Ovary (tissue), 10 donors: ENCODE measurements at regions of chr2 and their contacts with region 1.

Region 1: DNA sequence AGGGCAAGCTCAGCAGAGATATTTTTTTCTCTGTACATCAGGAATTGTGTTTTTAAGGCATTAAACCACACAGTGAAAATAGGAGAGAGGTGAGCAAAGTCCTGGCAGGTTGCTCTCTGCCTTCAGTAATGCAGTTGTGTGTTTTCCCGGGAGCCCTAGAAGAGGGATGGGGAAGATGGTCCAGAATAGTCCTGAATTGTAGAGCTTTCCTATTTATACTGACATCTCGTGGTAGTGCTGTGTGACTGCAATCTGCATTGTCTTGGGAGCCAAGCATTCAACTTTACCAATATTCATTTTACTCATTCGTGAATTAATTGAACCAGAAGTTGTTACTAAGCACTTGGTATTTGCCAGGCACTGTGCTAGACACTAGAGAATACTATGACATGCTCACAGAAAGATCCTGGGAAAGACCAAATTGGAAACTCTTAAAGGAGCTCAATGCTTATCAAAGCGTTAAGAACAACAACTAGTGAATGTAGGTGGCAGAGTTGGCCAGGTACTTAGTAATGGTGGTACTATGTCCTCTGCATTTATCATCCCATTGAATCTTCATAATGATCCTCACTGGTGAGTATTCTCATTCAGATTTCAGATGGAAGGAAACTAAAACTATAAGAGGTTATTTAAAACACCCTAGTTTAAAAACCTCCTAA is 214.6 kb downstream of the TRIB2 start:
- DNase-seq: peak in 1 of 5 donors; percentile 36
- H3K4me3 ChIP-seq: no peak overlapping the region
- H3K27ac ChIP-seq: no peak overlapping the region
- H3K4me1 ChIP-seq: peaks cover 2% of the 10 kb centered on the region
- H3K27me3 ChIP-seq: no peaks in the 10 kb centered on the region
- CTCF ChIP-seq: peak; percentile 56 to 88 (median 58)
- EP300 ChIP-seq: no peak
- POLR2A ChIP-seq: no peak

Region 2: DNA sequence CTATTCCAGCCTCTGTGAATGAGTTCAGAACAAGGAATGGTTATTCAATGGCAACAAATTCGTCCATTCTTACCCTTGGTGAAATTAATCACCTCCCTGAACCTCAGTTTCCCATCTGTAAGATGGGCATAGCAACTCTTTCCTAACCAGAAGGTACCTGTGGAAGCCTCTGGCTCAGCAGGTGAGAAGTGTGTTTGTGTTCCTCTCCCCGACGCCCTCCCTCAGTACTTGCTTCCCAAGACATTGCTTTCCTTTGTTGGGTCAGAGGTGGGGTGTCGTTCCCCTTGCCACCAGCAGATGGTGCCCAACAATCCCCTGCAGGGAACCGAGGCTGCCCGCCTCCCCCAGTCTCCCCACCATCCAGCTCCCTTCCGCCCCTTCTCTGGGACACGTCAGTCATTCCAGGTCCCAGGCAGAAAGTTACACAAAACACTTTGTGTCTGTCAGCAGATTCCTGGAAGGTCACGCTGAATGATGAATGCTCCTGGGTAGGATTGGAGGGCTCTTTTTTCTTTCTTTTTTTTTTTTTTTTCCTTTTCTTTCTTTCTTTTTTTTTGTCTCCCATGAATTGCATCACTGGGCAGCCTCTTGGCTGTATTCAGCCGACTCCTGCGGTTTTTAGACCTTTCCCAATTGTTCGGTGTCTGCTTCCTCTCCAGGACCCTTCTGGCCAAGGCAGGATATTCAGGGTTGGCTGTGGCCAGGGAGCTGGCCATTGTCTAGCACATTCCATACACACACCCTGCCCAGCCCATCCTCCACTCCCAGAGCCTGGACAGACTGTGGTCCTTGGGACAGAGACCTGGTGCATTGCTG is 1067.6 kb before region 1 on chr2:
- intact Hi-C with region 1: loop called in 2 of 4 experiments (anchors 5 to 10 kb)
- DNase-seq: peak; percentile 81 to 90 (median 88)
- H3K4me3 ChIP-seq: no peak overlapping the region
- H3K27ac ChIP-seq: peak overlapping the region in 1 of 2 donors; percentile 47
- H3K4me1 ChIP-seq: no peaks in the 10 kb centered on the region
- H3K27me3 ChIP-seq: no peaks in the 10 kb centered on the region
- CTCF ChIP-seq: peak; percentile 87 to 92 (median 90)
- EP300 ChIP-seq: no peak
- POLR2A ChIP-seq: peak; percentile 22

Region 3: DNA sequence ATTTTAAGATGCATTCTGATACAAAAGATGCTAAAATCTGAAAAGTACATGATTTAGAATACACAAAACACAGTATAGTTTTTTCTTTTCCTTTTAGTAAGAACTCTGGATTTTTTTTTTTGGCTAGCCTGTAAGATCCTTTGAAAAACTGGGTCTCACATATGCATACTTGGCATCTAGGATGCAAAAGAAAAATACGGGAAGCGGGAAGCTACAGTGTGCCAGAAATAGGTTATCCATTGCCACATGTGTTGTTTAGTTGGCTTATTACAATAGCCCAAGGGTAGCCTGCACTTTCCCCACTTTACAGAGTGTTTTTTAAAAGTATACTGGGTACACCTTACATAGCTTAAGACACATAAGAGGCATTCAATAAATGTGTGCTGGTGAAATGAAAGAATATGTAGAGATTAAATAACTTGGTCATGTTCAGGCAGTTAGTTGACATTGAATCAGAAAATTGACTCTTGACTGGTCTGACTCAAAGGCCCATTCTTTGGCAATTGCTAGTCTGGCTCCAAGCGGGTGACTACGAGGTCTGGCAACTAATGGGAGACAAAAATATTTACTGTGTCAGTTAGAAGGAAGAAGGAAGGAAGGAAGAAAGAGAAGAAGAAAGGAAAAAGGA is 501.4 kb before region 1 on chr2:
- intact Hi-C with region 1: loop called in 1 of 4 experiments (anchors 10 kb)
- DNase-seq: no peak
- H3K4me3 ChIP-seq: no peak overlapping the region
- H3K27ac ChIP-seq: peak overlapping the region in 1 of 2 donors; percentile 74
- H3K4me1 ChIP-seq: peaks cover 15% of the 10 kb centered on the region
- H3K27me3 ChIP-seq: no peaks in the 10 kb centered on the region
- CTCF ChIP-seq: no peak
- EP300 ChIP-seq: no peak
- POLR2A ChIP-seq: no peak

Region 4: GRCh38 chr2:12649602-12650400 is 281.5 kb before region 1 on chr2:
- intact Hi-C with region 1: no loop called
- DNase-seq: no peak
- H3K4me3 ChIP-seq: no peak overlapping the region
- H3K27ac ChIP-seq: no peak overlapping the region
- H3K4me1 ChIP-seq: no peaks in the 10 kb centered on the region
- H3K27me3 ChIP-seq: no peaks in the 10 kb centered on the region
- CTCF ChIP-seq: no peak
- EP300 ChIP-seq: no peak
- POLR2A ChIP-seq: no peak

Region 5: DNA sequence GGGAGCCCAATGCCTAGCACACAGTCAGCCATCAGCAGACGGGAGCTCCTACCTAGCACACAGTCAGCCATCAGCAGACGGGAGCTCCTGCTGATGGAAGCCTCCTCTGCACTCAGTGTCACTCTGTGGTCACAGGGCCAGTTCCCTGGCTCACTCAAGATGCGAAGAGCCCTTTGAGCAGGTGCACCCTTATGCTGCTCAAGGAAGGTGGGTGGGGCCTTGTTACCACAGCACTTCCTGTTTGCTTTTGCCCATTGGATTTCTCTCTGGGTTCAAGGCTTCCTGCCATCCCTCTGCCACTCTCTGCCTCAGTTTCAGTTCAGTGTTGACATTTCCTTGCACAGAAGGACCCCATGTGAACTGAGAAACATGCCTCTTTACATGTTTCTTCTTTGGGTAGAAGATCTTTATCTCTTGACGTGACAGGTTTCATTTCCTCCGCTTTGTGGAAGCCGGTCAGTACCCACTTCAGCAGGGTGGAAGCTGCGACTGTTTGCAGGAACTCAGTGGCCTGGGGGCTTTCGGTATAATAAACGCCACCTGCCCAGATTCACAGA is 203.0 kb before region 1 on chr2:
- intact Hi-C with region 1: loop called (anchors 5 to 10 kb)
- DNase-seq: no peak
- H3K4me3 ChIP-seq: no peak overlapping the region
- H3K27ac ChIP-seq: no peak overlapping the region
- H3K4me1 ChIP-seq: peaks cover 35% of the 10 kb centered on the region
- H3K27me3 ChIP-seq: no peaks in the 10 kb centered on the region
- CTCF ChIP-seq: no peak
- EP300 ChIP-seq: no peak
- POLR2A ChIP-seq: no peak

Region 6: GRCh38 chr2:12733846-12734245 is 197.5 kb before region 1 on chr2:
- intact Hi-C with region 1: loop called in 3 of 4 experiments (anchors 10 kb)
- DNase-seq: no peak
- H3K4me3 ChIP-seq: no peak overlapping the region
- H3K27ac ChIP-seq: peak overlapping the region; percentile 22 to 55
- H3K4me1 ChIP-seq: peaks cover 43% of the 10 kb centered on the region
- H3K27me3 ChIP-seq: no peaks in the 10 kb centered on the region
- CTCF ChIP-seq: no peak
- EP300 ChIP-seq: no peak
- POLR2A ChIP-seq: no peak

Region 7: GRCh38 chr2:13006829-13007717 is 75.8 kb after region 1 on chr2:
- intact Hi-C with region 1: no loop called
- DNase-seq: peak; percentile 58 to 76 (median 67)
- H3K4me3 ChIP-seq: peak overlapping the region; percentile 28
- H3K27ac ChIP-seq: peak overlapping the region in 1 of 2 donors; percentile 62
- H3K4me1 ChIP-seq: no peaks in the 10 kb centered on the region
- H3K27me3 ChIP-seq: no peaks in the 10 kb centered on the region
- CTCF ChIP-seq: peak; percentile 84 to 86 (median 86)
- EP300 ChIP-seq: no peak
- POLR2A ChIP-seq: no peak